Activated CD4-positive, alpha-beta T cell treated with anti-CD3 and anti-CD28 coated beads, Interleukin-2, amount 10 ng/mL, durations not matched to agents 7 days and 5 days (primary cell): ENCODE measurements at regions of chr11 and their contacts with region 1.

Region 1: GRCh38 chr11:96054870-96055705 is 131.2 kb upstream of the MTMR2 start:
- DNase-seq: no peak
- H3K4me3 Mint-ChIP-seq: no peak overlapping the region
- H3K27ac Mint-ChIP-seq: no peak overlapping the region
- H3K4me1 Mint-ChIP-seq: peaks cover 59% of the 10 kb centered on the region
- H3K27me3 Mint-ChIP-seq: no peaks in the 10 kb centered on the region

Region 2: GRCh38 chr11:95937358-95937757 is 117.7 kb before region 1 on chr11:
- CTCF ChIA-PET with region 1: no interaction called
- POLR2A ChIA-PET with region 1: no interaction called
- DNase-seq: no peak
- H3K4me3 Mint-ChIP-seq: no peak overlapping the region
- H3K27ac Mint-ChIP-seq: no peak overlapping the region
- H3K4me1 Mint-ChIP-seq: no peaks in the 10 kb centered on the region
- H3K27me3 Mint-ChIP-seq: no peaks in the 10 kb centered on the region

Region 3: DNA sequence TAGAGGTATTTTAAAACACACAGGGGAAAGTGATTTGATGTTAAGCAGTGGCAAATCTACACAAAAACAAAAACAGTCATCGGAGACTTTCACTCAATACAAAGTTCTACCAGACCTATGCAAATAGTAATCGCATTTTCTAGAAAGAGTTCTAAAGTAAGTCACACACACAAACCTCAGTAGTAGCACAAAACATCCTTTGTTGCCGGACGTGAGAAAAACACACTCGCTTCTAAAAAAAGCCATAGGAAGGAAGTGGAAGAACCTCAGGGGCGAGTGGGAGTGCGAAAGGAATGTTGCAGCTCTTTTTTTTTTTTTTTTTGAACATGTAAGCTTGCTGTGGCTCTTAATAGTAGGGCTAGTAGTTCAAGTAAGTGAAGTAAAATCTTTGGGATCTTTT is 199.0 kb after region 1 on chr11:
- CTCF ChIA-PET with region 1: no interaction called
- POLR2A ChIA-PET with region 1: interaction called, 10 read pairs
- DNase-seq: peak; percentile 48
- H3K4me3 Mint-ChIP-seq: peak overlapping the region; percentile 52
- H3K27ac Mint-ChIP-seq: peak overlapping the region; percentile 96
- H3K4me1 Mint-ChIP-seq: peaks cover 90% of the 10 kb centered on the region
- H3K27me3 Mint-ChIP-seq: no peaks in the 10 kb centered on the region